Activated T-helper 1 cell treated with anti-CD3 and anti-CD28 coated beads, Interleukin-12 subunit alpha, Interleukin-12 subunit beta, Interleukin-2, Interleukin-4 antibody, amounts not matched to agents 30 ng/mL and 10 ng/mL and 1 ng/mL, durations not matched to agents 14 hours and 24 hours and 36 hours (primary cell): ENCODE measurements at regions of chr2 and their contacts with region 1.

Region 1: GRCh38 chr2:171687287-171688128 is at the start of gene DYNC1I2:
- DNase-seq: peak; percentile 63
- H3K4me3 Mint-ChIP-seq: peak within 1 kb of the TSS; percentile 85
- H3K27ac Mint-ChIP-seq: peak within 1 kb of the TSS; percentile 84
- H3K4me1 Mint-ChIP-seq: peaks cover 20% of the 10 kb centered on the region
- H3K27me3 Mint-ChIP-seq: peaks cover 10% of the 10 kb centered on the region
- total RNA-seq, gene DYNC1I2: 49.3 and 49.4 TPM in 2 replicates

Region 2: DNA sequence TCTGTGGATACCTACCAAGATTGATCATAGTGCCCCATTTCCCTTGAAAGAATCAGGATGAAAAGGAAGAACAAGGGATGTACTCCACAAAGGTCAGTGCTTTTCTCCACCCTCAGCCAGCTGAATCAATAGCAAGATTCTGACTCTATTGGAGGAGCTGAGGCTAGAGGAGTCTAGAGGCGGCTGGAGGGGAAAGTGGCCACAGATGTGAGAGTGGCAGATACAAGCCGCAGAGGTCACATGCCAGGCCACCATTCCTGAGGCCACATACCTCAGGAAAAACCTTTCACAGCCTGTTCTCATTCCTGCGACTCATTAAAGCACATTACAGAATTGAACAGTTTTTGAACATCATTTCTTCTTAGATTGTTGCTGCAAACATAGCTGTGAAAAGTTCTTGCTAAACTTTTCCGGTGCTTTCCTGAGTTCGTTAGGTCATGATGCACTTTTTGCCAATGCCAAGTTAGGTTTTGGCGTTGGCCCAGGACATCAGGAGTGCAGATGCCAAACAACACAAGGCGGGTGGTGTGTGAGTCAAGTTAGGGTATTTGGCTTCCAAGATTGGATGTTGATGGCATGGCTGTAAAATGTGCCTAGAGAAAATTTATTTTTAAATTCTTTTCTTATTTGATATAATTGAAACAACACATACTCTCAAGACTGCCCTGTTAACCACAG is 1133.1 kb before region 1 on chr2:
- intact Hi-C with region 1: no loop called
- DNase-seq: no peak
- H3K4me3 Mint-ChIP-seq: no peak overlapping the region
- H3K27ac Mint-ChIP-seq: no peak overlapping the region
- H3K4me1 Mint-ChIP-seq: no peaks in the 10 kb centered on the region
- H3K27me3 Mint-ChIP-seq: peaks cover 2% of the 10 kb centered on the region

Region 3: DNA sequence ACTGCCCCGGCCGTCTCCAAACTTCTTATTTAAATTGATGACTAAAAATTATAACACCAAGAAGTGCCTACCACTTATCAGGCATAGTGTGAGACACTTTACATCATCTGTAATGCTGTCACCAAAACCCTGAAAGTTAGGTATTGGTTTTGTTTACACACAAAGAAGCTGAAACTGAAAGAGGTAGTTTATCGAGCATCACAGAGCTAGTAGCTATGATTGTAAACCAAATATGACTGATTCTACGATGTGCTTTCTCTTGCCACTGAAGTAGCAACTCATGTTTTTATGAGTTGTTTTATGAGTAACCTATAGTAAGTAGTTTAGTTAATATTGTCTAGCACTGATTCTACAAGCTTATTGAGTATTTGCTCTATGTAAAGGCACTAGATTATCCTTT is 31.2 kb after region 1 on chr2:
- intact Hi-C with region 1: loop called (anchors 2 kb)
- DNase-seq: no peak
- H3K4me3 Mint-ChIP-seq: no peak overlapping the region
- H3K27ac Mint-ChIP-seq: no peak overlapping the region
- H3K4me1 Mint-ChIP-seq: peaks cover 9% of the 10 kb centered on the region
- H3K27me3 Mint-ChIP-seq: no peaks in the 10 kb centered on the region

Region 4: GRCh38 chr2:171999604-172000469 is 312.3 kb after region 1 on chr2 and contains the start of gene METAP1D:
- intact Hi-C with region 1: loop called (anchors 1 kb)
- DNase-seq: peak; percentile 88
- H3K4me3 Mint-ChIP-seq: peak within 1 kb of the TSS; percentile 98
- H3K27ac Mint-ChIP-seq: peak within 1 kb of the TSS; percentile 96
- H3K4me1 Mint-ChIP-seq: peaks cover 19% of the 10 kb centered on the region
- H3K27me3 Mint-ChIP-seq: peaks cover 5% of the 10 kb centered on the region
- total RNA-seq, gene METAP1D: 5.4 and 6.4 TPM in 2 replicates